Activated naive CD4-positive, alpha-beta T cell treated with anti-CD3 and anti-CD28 coated beads for 36 hours (primary cell): ENCODE measurements at regions of chr9 and their contacts with region 1.

Region 1: GRCh38 chr9:6681147-6681956 is 35.8 kb upstream of the GLDC start:
- DNase-seq: peak; percentile 94
- H3K4me3 Mint-ChIP-seq: peak overlapping the region; percentile 95
- H3K27ac Mint-ChIP-seq: peak overlapping the region; percentile 99
- H3K4me1 Mint-ChIP-seq: peaks cover 18% of the 10 kb centered on the region
- H3K27me3 Mint-ChIP-seq: no peaks in the 10 kb centered on the region

Region 2: GRCh38 chr9:6015278-6016157 is 665.8 kb before region 1 on chr9 and contains the start of gene RANBP6:
- CTCF ChIA-PET with region 1: no interaction called
- intact Hi-C with region 1: loop called (anchors 2 kb)
- DNase-seq: peak; percentile 95
- H3K4me3 Mint-ChIP-seq: peak within 1 kb of the TSS; percentile 98
- H3K27ac Mint-ChIP-seq: peak within 1 kb of the TSS; percentile 99
- H3K4me1 Mint-ChIP-seq: peaks cover 42% of the 10 kb centered on the region
- H3K27me3 Mint-ChIP-seq: no peaks in the 10 kb centered on the region
- total RNA-seq, gene RANBP6: 19.0 to 19.5 TPM

Region 3: GRCh38 chr9:6353851-6354686 is 327.3 kb before region 1 on chr9:
- CTCF ChIA-PET with region 1: interaction called, 3 read pairs
- intact Hi-C with region 1: loop called (anchors 5 kb)
- DNase-seq: peak; percentile 16
- H3K4me3 Mint-ChIP-seq: no peak overlapping the region
- H3K27ac Mint-ChIP-seq: no peak overlapping the region
- H3K4me1 Mint-ChIP-seq: peaks cover 10% of the 10 kb centered on the region
- H3K27me3 Mint-ChIP-seq: peaks cover 5% of the 10 kb centered on the region

Region 4: DNA sequence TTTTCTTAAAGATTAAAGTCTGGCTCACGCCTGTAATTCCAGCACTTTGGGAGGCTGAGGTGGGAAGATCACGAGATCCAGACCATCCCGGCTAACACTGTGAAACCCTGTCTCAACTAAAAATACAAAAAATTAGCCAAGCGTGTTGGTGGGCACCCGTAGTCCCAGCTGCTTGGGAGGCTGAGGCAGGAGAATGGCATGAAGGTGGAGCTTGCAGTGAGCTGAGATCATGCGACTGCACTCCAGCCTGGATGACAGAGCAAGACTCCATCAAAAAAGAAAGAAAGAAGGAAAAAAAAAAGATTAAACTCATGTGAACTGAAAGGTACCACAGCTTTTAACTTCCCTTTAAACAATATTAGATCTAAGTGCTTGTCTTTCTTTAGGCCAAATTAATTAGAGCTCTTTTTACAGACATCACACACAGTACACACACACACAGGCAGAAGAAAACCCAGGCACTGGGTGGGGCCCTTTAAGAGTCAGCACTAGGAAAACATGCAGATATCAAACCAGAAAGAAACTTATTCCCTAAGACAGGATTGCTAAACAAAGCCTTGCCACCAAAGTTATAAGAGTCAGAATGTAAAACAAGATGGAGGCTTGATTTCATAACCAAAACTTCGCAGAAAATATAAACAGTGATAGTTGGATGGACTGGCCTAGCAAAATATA is 297.7 kb before region 1 on chr9:
- CTCF ChIA-PET with region 1: no interaction called
- intact Hi-C with region 1: no loop called
- DNase-seq: no peak
- H3K4me3 Mint-ChIP-seq: no peak overlapping the region
- H3K27ac Mint-ChIP-seq: no peak overlapping the region
- H3K4me1 Mint-ChIP-seq: no peaks in the 10 kb centered on the region
- H3K27me3 Mint-ChIP-seq: no peaks in the 10 kb centered on the region

Region 5: DNA sequence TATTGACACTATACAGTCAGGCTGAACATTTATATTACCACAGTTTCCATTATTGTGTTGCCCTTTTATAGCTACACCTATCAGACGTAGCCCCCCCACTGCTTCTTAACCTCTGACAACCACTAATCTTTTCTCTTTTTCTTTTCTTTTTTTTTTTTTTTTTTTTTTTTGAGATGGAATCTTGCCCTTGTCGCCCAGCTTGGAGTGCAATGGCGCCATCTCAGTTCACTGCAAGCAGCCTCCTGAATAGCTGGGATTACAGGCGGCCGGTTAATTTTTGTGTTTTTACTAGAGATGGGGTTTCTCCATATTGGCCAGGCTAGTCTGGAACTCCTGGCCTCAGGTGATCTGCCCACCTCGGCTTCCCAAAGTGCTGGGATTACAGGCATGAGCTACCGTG is 193.0 kb before region 1 on chr9:
- CTCF ChIA-PET with region 1: no interaction called
- intact Hi-C with region 1: no loop called
- DNase-seq: no peak
- H3K4me3 Mint-ChIP-seq: no peak overlapping the region
- H3K27ac Mint-ChIP-seq: no peak overlapping the region
- H3K4me1 Mint-ChIP-seq: peaks cover 3% of the 10 kb centered on the region
- H3K27me3 Mint-ChIP-seq: no peaks in the 10 kb centered on the region

Region 6: GRCh38 chr9:6645355-6646292 is 35.7 kb before region 1 on chr9 and contains the start of gene GLDC:
- CTCF ChIA-PET with region 1: interaction called, 3 read pairs
- intact Hi-C with region 1: loop called (anchors 1 kb)
- DNase-seq: peak; percentile 62
- H3K4me3 Mint-ChIP-seq: peak within 1 kb of the TSS; percentile 76
- H3K27ac Mint-ChIP-seq: no peak within 1 kb of the TSS
- H3K4me1 Mint-ChIP-seq: peaks cover 19% of the 10 kb centered on the region
- H3K27me3 Mint-ChIP-seq: peaks cover 45% of the 10 kb centered on the region
- total RNA-seq, gene GLDC: 1.7 to 1.9 TPM

Region 7: GRCh38 chr9:6715755-6716643 is 34.6 kb after region 1 on chr9:
- CTCF ChIA-PET with region 1: no interaction called
- intact Hi-C with region 1: loop called (anchors 1 kb)
- DNase-seq: peak; percentile 80
- H3K4me3 Mint-ChIP-seq: peak overlapping the region; percentile 79
- H3K27ac Mint-ChIP-seq: peak overlapping the region; percentile 71
- H3K4me1 Mint-ChIP-seq: peaks cover 6% of the 10 kb centered on the region
- H3K27me3 Mint-ChIP-seq: no peaks in the 10 kb centered on the region